ENCODE measurements at regions of chr17 and their contacts with region 1.

Region 1: GRCh38 chr17:78865682-78866390 is 25.2 kb upstream of the USP36 start:
- DNase-seq: peak; percentile 71
- ATAC-seq: peak; percentile 87
- H3K4me3 ChIP-seq: no peak overlapping the region; a peak in 1 of 4 replicates
- H3K27ac ChIP-seq: no peak overlapping the region
- H3K4me1 ChIP-seq: peaks cover 13% of the 10 kb centered on the region
- H3K27me3 ChIP-seq: no peaks in the 10 kb centered on the region
- CTCF ChIP-seq: peak; percentile 96

Region 2: DNA sequence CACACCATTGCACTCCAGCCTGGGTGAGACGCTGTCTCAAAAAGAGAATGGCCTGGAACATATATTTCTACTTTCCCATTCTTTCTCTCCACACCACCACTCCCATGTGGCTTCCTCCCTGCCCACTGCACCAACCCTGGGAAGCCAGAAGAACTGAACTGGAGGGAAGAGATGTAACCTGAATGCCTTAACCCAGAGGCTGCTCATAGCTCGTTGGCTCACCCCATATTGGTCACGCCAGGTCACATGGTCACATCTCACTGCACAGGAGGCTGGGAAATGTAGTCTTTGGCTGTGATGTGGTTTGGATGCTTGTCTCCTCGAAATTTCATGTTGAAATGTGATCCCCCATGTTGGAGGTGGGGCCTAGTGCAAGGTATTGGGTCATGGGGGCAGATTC is 282.7 kb before region 1 on chr17:
- CTCF ChIA-PET with region 1: no interaction called
- POLR2A ChIA-PET with region 1: no interaction called
- in situ Hi-C with region 1: no loop called
- intact Hi-C with region 1: no loop called
- DNase-seq: no peak
- ATAC-seq: peak; percentile 60; the same call in 1 of the 2 replicates
- H3K4me3 ChIP-seq: no peak overlapping the region
- H3K27ac ChIP-seq: no peak overlapping the region
- H3K4me1 ChIP-seq: no peaks in the 10 kb centered on the region
- H3K27me3 ChIP-seq: no peaks in the 10 kb centered on the region
- CTCF ChIP-seq: no peak

Region 3: DNA sequence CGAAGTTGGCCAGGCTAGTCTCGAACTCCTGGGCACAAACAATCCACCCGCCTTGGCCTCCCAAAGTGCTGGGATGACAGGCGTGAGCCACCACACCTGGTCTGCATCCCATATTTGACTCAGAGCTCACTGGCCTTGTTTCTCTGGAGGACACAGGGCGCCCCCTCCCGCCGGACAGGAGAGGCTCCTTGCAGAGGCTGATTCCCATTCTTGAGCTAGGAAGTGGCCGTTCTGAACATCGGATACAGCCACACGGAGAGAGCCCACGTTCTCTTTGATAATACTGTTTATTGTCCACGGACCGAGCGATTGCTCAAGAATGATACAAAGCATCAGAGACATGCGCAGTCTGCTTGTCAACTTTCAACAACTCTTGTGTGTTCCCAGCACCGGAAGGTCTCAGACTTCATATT is 13.1 kb before region 1 on chr17:
- CTCF ChIA-PET with region 1: interaction called, 10 read pairs
- POLR2A ChIA-PET with region 1: interaction called, 6 read pairs
- in situ Hi-C with region 1: no loop called
- intact Hi-C with region 1: no loop called
- DNase-seq: no peak
- ATAC-seq: peak; percentile 84
- H3K4me3 ChIP-seq: no peak overlapping the region
- H3K27ac ChIP-seq: no peak overlapping the region
- H3K4me1 ChIP-seq: no peaks in the 10 kb centered on the region
- H3K27me3 ChIP-seq: no peaks in the 10 kb centered on the region
- CTCF ChIP-seq: peak; percentile 83; the same call in 1 of the 2 replicates

Region 4: DNA sequence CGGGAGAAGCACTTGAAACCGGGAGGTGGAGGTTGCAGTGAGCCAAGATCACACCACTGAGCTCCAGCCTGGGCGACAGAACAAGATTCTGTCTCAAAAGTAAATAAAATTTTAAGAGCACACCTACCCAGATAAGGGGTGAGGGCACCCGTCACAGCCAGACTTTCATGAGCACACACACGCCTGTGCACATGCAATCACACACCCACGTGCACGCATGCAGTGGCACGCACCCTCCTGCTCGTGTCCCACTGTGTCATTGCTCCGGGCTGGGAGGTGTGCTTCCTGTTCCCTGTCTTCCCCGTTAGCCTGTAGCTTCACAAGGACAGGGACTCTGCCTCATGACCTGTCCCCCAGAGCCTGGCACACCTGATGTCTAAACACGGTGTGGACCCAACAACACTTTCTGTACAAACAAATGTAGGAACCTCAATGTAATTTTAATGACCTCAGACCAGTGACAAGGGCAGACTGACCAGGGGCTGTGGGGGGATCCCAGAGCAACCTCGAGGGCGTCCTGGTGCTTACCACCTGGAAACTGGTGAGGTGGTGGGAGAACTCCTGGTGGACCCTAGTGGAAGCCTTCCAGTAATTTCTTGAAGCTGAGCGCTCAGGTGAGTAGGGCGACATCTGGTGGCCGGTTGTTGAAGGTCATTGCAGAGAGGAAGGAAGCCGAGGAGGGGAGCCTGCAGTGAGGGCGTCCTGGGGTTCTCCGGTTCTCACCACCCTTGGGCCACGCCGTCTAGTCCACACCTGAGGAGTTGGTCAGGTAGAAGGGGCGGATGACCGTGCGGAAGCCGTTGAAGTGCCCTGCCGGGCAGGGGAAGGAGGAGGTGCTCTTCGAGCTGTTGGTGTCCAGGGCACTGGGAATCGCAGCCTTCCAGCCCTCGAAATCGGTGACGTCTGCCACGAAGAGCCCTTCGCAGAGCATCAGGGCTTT is 105.3 kb after region 1 on chr17:
- CTCF ChIA-PET with region 1: interaction called, 33 read pairs
- POLR2A ChIA-PET with region 1: no interaction called
- in situ Hi-C with region 1: no loop called
- intact Hi-C with region 1: loop called (anchors 2 kb)
- DNase-seq: no peak
- ATAC-seq: peak; percentile 70
- H3K4me3 ChIP-seq: no peak overlapping the region
- H3K27ac ChIP-seq: peak overlapping the region; percentile 34; the same call in 1 of the 2 replicates
- H3K4me1 ChIP-seq: peaks cover 5% of the 10 kb centered on the region; the same call in 1 of the 2 replicates
- H3K27me3 ChIP-seq: no peaks in the 10 kb centered on the region
- CTCF ChIP-seq: peak; percentile 95

Measured in Panc1 (cell line).